Activated CD4-positive, alpha-beta memory T cell treated with anti-CD3 and anti-CD28 coated beads for 36 hours (primary cell): ENCODE measurements at regions of chr1 and their contacts with region 1.

Region 1: GRCh38 chr1:34885405-34886247 is 26.1 kb upstream of the SMIM12 start:
- DNase-seq: peak; percentile 77
- H3K4me3 Mint-ChIP-seq: peak overlapping the region; percentile 62
- H3K27ac Mint-ChIP-seq: no peak overlapping the region
- H3K4me1 Mint-ChIP-seq: peaks cover 3% of the 10 kb centered on the region
- H3K27me3 Mint-ChIP-seq: peaks cover 28% of the 10 kb centered on the region

Region 2: DNA sequence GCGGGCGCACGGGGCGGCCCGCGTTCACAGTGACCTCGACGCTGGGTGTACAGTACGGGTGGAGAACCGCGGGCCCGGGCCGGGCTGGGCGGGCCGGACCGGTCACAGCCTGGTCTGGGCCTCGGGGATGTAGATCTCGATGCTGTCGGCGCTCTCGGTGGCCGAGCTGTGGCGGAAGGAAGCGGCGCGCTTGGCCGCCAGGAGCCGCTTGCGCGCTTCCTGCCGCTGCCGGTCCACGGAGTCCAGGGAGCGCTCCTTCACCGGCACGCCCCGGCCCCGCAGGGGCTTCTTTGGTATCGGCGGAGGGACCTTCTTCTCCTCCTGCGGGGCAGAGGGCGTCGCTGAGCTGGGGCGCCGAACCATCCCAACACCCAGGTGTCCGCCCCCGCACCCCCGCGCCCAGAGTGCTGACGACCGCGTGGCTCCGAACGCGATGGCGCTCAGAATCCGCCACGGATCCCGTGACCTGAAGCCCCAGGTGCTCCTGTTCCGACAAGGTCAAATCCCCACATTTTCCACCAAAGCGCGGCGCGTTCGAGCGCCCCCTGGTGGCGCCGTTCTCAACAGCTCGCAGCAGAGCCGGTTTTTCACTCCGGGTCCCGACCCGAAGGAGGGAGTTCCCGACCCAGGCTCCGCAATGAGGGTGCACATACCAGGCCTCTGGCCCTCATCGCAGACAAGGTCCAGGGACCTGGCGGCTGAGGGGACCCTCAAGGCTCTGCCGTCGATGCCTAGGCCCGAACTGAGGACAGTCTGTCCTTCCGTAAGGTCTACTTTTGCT is 19.5 kb before region 1 on chr1:
- CTCF ChIA-PET with region 1: interaction called, 17 read pairs
- POLR2A ChIA-PET with region 1: interaction called, 3 read pairs
- intact Hi-C with region 1: no loop called
- DNase-seq: peak; percentile 96
- H3K4me3 Mint-ChIP-seq: peak overlapping the region; percentile 74
- H3K27ac Mint-ChIP-seq: peak overlapping the region; percentile 81
- H3K4me1 Mint-ChIP-seq: peaks cover 17% of the 10 kb centered on the region
- H3K27me3 Mint-ChIP-seq: no peaks in the 10 kb centered on the region